ENCODE measurements at regions of chr5 and their contacts with region 1.

Region 1: GRCh38 chr5:147576646-147577535 is 67.0 kb upstream of the DPYSL3 start:
- H3K4me3 ChIP-seq: no peak overlapping the region
- H3K27ac ChIP-seq: no peak overlapping the region
- H3K4me1 ChIP-seq: no peaks in the 10 kb centered on the region
- CTCF ChIP-seq: no peak

Region 2: GRCh38 chr5:147223948-147224791 is 352.7 kb before region 1 on chr5:
- CTCF ChIA-PET with region 1: interaction called, 32 read pairs
- POLR2A ChIA-PET with region 1: no interaction called
- H3K4me3 ChIP-seq: no peak overlapping the region
- H3K27ac ChIP-seq: no peak overlapping the region
- H3K4me1 ChIP-seq: no peaks in the 10 kb centered on the region
- CTCF ChIP-seq: no peak

Region 3: GRCh38 chr5:147290261-147290660 is 286.6 kb before region 1 on chr5:
- CTCF ChIA-PET with region 1: no interaction called
- POLR2A ChIA-PET with region 1: no interaction called
- H3K4me3 ChIP-seq: no peak overlapping the region
- H3K27ac ChIP-seq: no peak overlapping the region
- H3K4me1 ChIP-seq: no peaks in the 10 kb centered on the region
- CTCF ChIP-seq: no peak

Region 4: DNA sequence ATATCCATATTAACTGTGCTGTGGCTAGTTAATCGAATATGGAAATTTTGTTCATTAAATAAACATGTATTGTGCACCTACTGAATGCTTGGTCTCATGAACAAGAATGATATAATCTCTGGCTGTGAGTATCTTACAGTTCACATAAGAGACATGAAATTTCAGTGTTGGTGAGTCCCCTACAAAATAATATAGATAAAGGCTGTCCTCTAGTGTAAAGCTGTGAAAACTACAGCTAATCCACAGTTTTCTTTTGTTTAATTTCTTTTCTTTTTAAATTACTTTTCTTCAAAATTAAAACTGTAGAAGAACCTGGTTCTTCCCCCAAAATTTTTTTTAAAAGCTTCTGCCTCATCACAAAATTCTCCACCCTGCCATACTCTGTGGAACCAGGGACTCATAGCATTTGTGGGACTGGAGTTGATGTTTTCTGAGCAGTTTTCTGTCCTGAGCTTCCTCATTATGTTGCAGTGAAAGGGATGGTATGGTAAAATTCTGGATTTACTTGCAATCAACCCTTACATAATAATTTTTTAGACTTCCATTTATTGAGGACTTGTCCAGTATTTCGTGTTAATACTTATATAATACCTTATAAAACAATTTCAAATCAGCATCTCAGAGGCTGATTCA is 207.0 kb before region 1 on chr5:
- CTCF ChIA-PET with region 1: interaction called, 21 read pairs
- POLR2A ChIA-PET with region 1: no interaction called
- H3K4me3 ChIP-seq: no peak overlapping the region
- H3K27ac ChIP-seq: no peak overlapping the region
- H3K4me1 ChIP-seq: no peaks in the 10 kb centered on the region
- CTCF ChIP-seq: peak; percentile 37; the same call in 1 of the 2 replicates

Region 5: DNA sequence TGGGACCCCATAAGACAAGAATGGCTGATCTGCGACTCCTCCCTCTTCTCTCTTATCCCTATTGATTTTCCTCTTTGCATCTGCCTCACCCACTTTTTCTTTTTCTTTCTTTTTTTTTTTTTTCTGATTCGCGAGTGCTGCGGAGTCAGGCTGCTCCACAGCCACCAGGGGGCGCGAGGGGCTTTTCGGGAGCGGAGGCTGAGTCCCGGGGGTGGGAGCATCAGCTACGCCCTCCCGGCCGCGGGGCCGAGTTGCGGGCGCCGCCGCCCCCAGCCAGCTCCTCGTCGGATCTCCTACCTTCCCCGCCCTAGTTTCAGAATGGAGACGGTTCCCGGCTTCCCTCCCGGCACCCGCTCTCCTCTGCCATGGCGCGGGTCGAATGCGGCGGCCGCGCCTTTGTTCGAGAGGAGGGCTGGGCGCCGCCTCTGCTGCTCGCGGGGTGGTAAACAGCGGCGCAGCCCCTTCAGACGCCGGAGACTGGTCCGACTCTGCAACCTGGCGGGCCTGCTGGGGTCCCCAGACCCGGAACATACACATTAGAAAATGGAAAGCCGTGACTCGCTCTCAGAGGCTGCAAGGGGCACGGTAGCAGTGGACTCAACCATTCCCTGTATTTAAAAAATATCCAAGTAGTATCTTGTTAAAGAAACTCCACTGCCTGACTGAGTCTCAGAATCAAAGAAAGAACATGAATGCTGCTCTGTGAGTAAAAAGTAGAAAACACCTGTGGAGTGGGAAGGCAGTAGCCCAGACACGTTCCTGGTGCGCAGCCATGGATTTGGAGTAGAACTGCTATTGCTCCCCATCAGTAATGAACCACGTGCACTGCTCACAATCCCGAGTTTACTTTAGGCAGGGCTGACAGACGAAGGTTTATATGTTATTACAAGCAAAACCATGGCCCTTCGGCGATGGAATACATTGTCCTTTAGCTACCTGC is 122.7 kb before region 1 on chr5:
- CTCF ChIA-PET with region 1: interaction called, 11 read pairs
- POLR2A ChIA-PET with region 1: interaction called, 6 read pairs
- H3K4me3 ChIP-seq: peak overlapping the region; percentile 92
- H3K27ac ChIP-seq: peak overlapping the region; percentile 73
- H3K4me1 ChIP-seq: peaks cover 14% of the 10 kb centered on the region; the same call in 1 of the 2 replicates
- CTCF ChIP-seq: peak; percentile 98

Region 6: DNA sequence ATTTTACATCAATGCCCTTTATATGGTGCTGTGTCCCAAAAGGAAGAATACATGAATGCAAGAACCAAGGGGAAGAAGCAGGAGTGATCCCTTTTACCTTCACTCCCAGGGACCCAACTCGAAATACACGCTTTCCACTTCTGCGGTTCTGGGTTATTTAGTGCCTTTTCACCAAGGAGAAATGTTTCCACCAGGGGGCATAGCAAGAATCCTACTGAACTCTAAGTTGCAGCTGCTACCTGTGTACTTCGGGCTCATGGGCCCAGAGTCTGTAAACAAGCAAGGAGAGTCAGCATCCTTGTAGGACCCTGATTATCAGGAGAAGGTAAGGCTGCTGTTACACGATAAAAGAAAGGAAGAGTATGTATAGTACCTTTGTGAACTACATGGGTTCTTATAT is 112.7 kb before region 1 on chr5:
- CTCF ChIA-PET with region 1: interaction called, 15 read pairs
- POLR2A ChIA-PET with region 1: no interaction called
- H3K4me3 ChIP-seq: no peak overlapping the region
- H3K27ac ChIP-seq: no peak overlapping the region
- H3K4me1 ChIP-seq: 0 out of 2 replicates have a peak, but pooled peaks cover 3% of the 10 kb centered on the region
- CTCF ChIP-seq: no peak

Region 7: GRCh38 chr5:147539053-147539452 is 37.8 kb before region 1 on chr5:
- CTCF ChIA-PET with region 1: interaction called, 10 read pairs
- POLR2A ChIA-PET with region 1: no interaction called
- H3K4me3 ChIP-seq: no peak overlapping the region
- H3K27ac ChIP-seq: no peak overlapping the region
- H3K4me1 ChIP-seq: peaks cover 8% of the 10 kb centered on the region
- CTCF ChIP-seq: no peak

Region 8: DNA sequence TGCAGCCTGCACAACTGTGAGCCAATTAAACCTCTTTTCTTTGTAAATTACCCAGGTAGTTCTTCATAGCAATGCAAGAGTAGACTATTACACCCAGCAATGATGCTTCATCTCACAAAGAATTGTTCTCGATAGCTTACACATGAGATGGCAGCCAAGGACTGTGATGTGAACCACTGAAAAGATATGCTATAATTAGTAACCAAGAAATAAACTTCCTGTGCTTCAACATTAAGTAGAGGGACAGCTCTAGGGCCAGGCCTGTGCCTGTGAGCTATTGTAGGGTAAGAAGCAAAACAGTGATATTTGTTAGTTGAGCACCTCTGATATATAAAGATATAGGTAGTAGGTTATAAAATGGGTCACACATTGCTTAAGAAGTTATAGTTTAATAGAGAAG is 25.2 kb before region 1 on chr5:
- CTCF ChIA-PET with region 1: no interaction called
- POLR2A ChIA-PET with region 1: no interaction called
- H3K4me3 ChIP-seq: no peak overlapping the region
- H3K27ac ChIP-seq: no peak overlapping the region
- H3K4me1 ChIP-seq: no peaks in the 10 kb centered on the region
- CTCF ChIP-seq: no peak

Region 9: GRCh38 chr5:147565524-147565923 is 11.4 kb before region 1 on chr5:
- CTCF ChIA-PET with region 1: interaction called, 17 read pairs
- POLR2A ChIA-PET with region 1: no interaction called
- H3K4me3 ChIP-seq: no peak overlapping the region
- H3K27ac ChIP-seq: no peak overlapping the region
- H3K4me1 ChIP-seq: no peaks in the 10 kb centered on the region
- CTCF ChIP-seq: no peak

Region 10: DNA sequence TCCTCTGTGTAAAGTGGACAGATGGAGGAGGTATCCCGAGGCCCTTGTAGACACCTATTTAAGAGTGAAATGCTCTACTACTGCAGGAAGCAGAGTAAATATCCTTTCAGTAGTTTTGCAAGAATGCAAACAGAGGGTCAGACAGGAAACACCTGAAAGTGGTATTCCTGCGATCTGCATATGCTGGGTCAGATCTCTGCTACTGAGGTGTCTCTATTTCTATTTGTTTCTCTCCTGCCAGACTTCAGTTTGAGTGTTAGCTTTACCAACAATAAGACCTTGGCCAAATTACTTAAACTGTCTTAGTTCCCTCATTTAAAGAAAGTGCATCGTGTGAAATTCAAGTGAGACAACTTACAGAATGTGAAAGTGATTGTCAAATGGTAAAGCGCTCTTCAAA is 158.0 kb after region 1 on chr5:
- CTCF ChIA-PET with region 1: no interaction called
- POLR2A ChIA-PET with region 1: no interaction called
- H3K4me3 ChIP-seq: no peak overlapping the region
- H3K27ac ChIP-seq: no peak overlapping the region
- H3K4me1 ChIP-seq: peaks cover 6% of the 10 kb centered on the region; the same call in 1 of the 2 replicates
- CTCF ChIP-seq: no peak

Measured in HEK293 (cell line).